CD8-positive, alpha-beta memory T cell (primary cell): ENCODE measurements at regions of chr15 and their contacts with region 1.

Region 1: DNA sequence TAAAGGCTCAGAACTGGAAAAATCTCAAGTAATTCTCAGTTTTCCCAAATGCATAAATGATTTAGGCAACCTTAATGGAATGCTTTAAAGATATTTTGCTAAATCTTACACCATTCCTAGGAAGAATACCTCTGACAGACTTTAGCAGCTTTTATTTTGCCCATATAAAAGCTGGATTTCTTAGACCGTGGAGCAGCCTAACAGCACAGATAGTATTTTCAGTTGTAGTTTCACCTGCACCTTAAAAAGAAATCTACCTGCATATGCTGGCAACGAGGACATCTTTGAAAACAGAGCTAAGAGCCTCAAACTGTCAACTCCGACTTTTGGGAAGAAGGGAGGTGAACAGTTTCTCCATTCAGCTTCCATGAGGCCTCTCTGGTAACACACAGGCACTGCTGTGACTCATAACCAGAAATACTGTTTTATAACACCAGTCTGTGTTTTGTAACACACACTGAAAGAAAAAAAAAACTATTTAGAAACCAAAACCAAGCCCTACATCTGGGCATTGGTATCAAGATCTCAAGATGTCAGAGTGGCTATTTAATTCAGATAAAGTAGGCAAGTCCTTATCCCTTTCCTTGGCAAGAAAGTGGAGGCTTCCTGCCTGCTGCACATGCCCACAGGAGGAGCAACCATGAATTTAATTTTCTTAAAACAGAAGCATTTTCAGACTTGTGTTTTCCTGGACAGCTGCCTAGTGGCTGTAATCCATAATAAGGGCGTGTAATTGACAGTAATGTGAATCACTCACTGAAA is 181.5 kb upstream of the ICE2 start:
- DNase-seq: no peak
- H3K4me3 ChIP-seq: no peak overlapping the region
- H3K4me3 Mint-ChIP-seq: peak overlapping the region in 1 of 7 donors; percentile 32
- H3K27ac ChIP-seq: no peak overlapping the region
- H3K27ac Mint-ChIP-seq: peak overlapping the region in 1 of 8 donors; percentile 9
- H3K4me1 ChIP-seq: no peaks in the 10 kb centered on the region
- H3K4me1 Mint-ChIP-seq: peaks cover 13 to 56% (median 21%) of the 10 kb centered on the region in 3 donors
- H3K27me3 ChIP-seq: no peaks in the 10 kb centered on the region
- H3K27me3 Mint-ChIP-seq: no peaks in the 10 kb centered on the region

Region 2: DNA sequence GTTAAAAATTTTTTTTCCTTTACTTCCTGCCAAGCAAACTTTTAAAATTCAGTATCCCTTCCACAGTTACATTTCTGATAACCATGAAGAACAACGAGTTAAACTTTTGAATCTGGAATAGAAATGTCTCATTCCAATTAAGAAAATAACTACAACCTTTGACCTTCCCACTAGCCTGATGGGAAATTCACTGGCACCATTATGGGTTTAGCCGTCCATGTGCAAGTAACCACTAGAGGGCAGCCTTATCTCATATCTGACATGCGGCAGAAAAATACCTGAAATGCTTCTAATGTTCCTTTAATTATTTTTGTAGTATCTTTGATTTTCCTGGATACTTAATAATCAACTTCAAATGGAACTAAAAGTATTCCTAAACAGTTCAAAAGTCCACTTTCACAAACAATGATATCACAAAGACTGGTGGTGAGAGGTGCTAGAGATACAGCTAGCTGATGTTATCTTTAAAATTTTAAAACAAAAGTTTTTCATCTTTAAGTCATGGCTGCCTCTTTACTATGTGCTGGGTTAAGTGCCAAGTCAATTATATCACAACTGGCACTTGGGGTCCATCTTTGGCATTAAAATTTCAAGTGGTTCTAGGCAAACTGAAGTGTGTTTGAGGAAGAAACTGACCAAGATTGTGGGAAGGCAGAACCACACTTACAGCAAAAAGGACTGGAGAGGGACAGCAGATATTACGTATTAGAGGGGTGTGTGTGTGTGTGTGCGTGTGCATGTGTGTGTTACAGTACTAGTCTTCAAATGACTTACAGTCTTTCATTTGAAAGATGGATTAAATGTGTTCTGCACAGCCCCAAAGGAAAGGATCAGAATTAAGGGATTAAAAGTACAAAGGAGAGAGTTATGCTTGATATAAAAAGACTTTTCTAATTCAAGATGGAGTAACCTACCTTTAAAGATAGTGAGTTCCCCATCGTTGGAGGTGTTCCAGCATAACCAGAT is 74.4 kb before region 1 on chr15:
- CTCF ChIA-PET with region 1: no interaction called
- POLR2A ChIA-PET with region 1: no interaction called
- DNase-seq: peak in 4 of 5 donors; percentile 48 to 76 (median 74)
- H3K4me3 ChIP-seq: peak overlapping the region; percentile 16
- H3K4me3 Mint-ChIP-seq: peak overlapping the region; percentile 67 to 94 (median 81)
- H3K27ac ChIP-seq: no peak overlapping the region
- H3K27ac Mint-ChIP-seq: peak overlapping the region; percentile 66 to 99 (median 94)
- H3K4me1 ChIP-seq: peaks cover 92% of the 10 kb centered on the region
- H3K4me1 Mint-ChIP-seq: peaks cover 86 to 98% (median 93%) of the 10 kb centered on the region in 3 donors
- H3K27me3 ChIP-seq: no peaks in the 10 kb centered on the region
- H3K27me3 Mint-ChIP-seq: peaks cover 0 to 2% of the 10 kb centered on the region in 2 donors

Region 3: GRCh38 chr15:60672400-60672799 is 11.9 kb after region 1 on chr15:
- CTCF ChIA-PET with region 1: interaction called, 14 read pairs
- POLR2A ChIA-PET with region 1: no interaction called
- DNase-seq: no peak
- H3K4me3 ChIP-seq: no peak overlapping the region
- H3K4me3 Mint-ChIP-seq: no peak overlapping the region
- H3K27ac ChIP-seq: no peak overlapping the region
- H3K27ac Mint-ChIP-seq: peak overlapping the region in 1 of 8 donors; percentile 57
- H3K4me1 ChIP-seq: no peaks in the 10 kb centered on the region
- H3K4me1 Mint-ChIP-seq: peaks cover 5 to 35% (median 10%) of the 10 kb centered on the region in 3 donors
- H3K27me3 ChIP-seq: no peaks in the 10 kb centered on the region
- H3K27me3 Mint-ChIP-seq: no peaks in the 10 kb centered on the region

Region 4: DNA sequence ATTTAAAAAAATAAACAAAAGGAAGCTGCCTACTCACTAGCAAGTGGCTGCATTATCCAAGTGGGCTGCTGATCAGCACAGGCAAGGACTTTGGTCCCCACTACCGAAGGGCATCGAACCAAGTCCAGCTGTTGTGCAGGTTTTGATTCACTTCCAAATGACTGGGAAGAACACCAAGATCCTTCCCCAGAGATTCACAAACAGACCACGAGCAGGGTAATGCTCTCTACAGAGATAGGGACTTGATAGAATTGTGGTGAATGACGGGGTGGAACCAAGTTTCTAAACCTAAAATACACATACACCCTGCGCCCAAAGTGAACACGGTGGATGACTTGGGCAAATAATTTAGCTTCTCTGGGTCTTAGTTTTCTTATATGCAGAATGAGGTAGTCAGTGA is 22.1 kb after region 1 on chr15:
- CTCF ChIA-PET with region 1: no interaction called
- POLR2A ChIA-PET with region 1: no interaction called
- DNase-seq: no peak
- H3K4me3 ChIP-seq: no peak overlapping the region
- H3K4me3 Mint-ChIP-seq: no peak overlapping the region
- H3K27ac ChIP-seq: no peak overlapping the region
- H3K27ac Mint-ChIP-seq: peak overlapping the region in 1 of 8 donors; percentile 68
- H3K4me1 ChIP-seq: no peaks in the 10 kb centered on the region
- H3K4me1 Mint-ChIP-seq: no peaks in the 10 kb centered on the region
- H3K27me3 ChIP-seq: no peaks in the 10 kb centered on the region
- H3K27me3 Mint-ChIP-seq: no peaks in the 10 kb centered on the region

Region 5: DNA sequence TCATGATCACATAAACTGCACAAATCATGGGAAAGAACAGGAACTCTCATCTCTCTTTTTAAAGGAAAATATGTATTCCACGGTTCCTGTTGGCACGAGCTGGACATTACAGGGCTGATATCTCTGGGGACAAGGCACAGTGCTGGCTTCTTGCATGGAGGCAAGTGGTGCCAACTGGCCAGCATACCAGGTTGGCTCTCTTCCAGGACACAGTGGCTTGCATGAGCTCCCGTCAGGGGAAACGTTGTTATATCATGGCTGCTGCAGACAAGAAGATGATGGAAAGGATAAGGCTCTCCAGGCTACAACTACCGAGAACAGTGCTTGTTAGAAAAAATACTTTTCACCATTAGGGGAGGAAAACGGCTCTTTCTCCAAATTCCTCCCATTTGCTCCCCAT is 284.7 kb after region 1 on chr15:
- CTCF ChIA-PET with region 1: no interaction called
- POLR2A ChIA-PET with region 1: no interaction called
- DNase-seq: no peak
- H3K4me3 ChIP-seq: no peak overlapping the region
- H3K4me3 Mint-ChIP-seq: no peak overlapping the region
- H3K27ac ChIP-seq: no peak overlapping the region
- H3K27ac Mint-ChIP-seq: no peak overlapping the region
- H3K4me1 ChIP-seq: no peaks in the 10 kb centered on the region
- H3K4me1 Mint-ChIP-seq: no peaks in the 10 kb centered on the region
- H3K27me3 ChIP-seq: no peaks in the 10 kb centered on the region
- H3K27me3 Mint-ChIP-seq: peaks cover 22 to 66% of the 10 kb centered on the region in 2 donors

Region 6: GRCh38 chr15:61232266-61232665 is 571.8 kb after region 1 on chr15:
- CTCF ChIA-PET with region 1: no interaction called
- POLR2A ChIA-PET with region 1: no interaction called
- DNase-seq: no peak
- H3K4me3 ChIP-seq: no peak overlapping the region
- H3K4me3 Mint-ChIP-seq: no peak overlapping the region
- H3K27ac ChIP-seq: no peak overlapping the region
- H3K27ac Mint-ChIP-seq: no peak overlapping the region
- H3K4me1 ChIP-seq: peaks cover 8% of the 10 kb centered on the region
- H3K4me1 Mint-ChIP-seq: peaks cover 3 to 13% (median 12%) of the 10 kb centered on the region in 3 donors
- H3K27me3 ChIP-seq: peaks cover 9% of the 10 kb centered on the region
- H3K27me3 Mint-ChIP-seq: peaks cover 19 to 51% of the 10 kb centered on the region in 2 donors